Activated CD8-positive, alpha-beta memory T cell treated with anti-CD3 and anti-CD28 coated beads, Interleukin-2, amount 10 ng/mL, durations not matched to agents 7 days and 5 days (primary cell): ENCODE measurements at regions of chr6 and their contacts with region 1.

Region 1: GRCh38 chr6:150006961-150007464 is 18.3 kb downstream of the RAET1L start:
- DNase-seq: peak; percentile 51
- ATAC-seq: no peak
- H3K4me3 Mint-ChIP-seq: no peak overlapping the region
- H3K27ac Mint-ChIP-seq: no peak overlapping the region
- H3K4me1 Mint-ChIP-seq: peaks cover 36% of the 10 kb centered on the region
- H3K27me3 Mint-ChIP-seq: peaks cover 44% of the 10 kb centered on the region

Region 2: GRCh38 chr6:149925974-149926777 is 80.8 kb before region 1 on chr6:
- CTCF ChIA-PET with region 1: no interaction called
- DNase-seq: peak; percentile 90
- ATAC-seq: peak; percentile 76
- H3K4me3 Mint-ChIP-seq: peak overlapping the region; percentile 57
- H3K27ac Mint-ChIP-seq: no peak overlapping the region
- H3K4me1 Mint-ChIP-seq: peaks cover 26% of the 10 kb centered on the region
- H3K27me3 Mint-ChIP-seq: peaks cover 92% of the 10 kb centered on the region

Region 3: GRCh38 chr6:149963462-149964307 is 43.3 kb before region 1 on chr6 and contains the start of gene ULBP1:
- CTCF ChIA-PET with region 1: no interaction called
- DNase-seq: peak; percentile 89
- ATAC-seq: peak; percentile 82
- H3K4me3 Mint-ChIP-seq: peak within 1 kb of the TSS; percentile 85
- H3K27ac Mint-ChIP-seq: peak within 1 kb of the TSS; percentile 86
- H3K4me1 Mint-ChIP-seq: peaks cover 22% of the 10 kb centered on the region
- H3K27me3 Mint-ChIP-seq: peaks cover 81% of the 10 kb centered on the region
- total RNA-seq, gene ULBP1: 0.82 to 1.2 TPM

Region 4: GRCh38 chr6:149990618-149991471 is 16.2 kb before region 1 on chr6:
- CTCF ChIA-PET with region 1: interaction called, 13 read pairs
- DNase-seq: peak; percentile 54
- ATAC-seq: peak; percentile 62
- H3K4me3 Mint-ChIP-seq: peak overlapping the region; percentile 68
- H3K27ac Mint-ChIP-seq: peak overlapping the region; percentile 4
- H3K4me1 Mint-ChIP-seq: peaks cover 32% of the 10 kb centered on the region
- H3K27me3 Mint-ChIP-seq: peaks cover 92% of the 10 kb centered on the region

Region 5: GRCh38 chr6:150499882-150500312 is 492.9 kb after region 1 on chr6:
- CTCF ChIA-PET with region 1: no interaction called
- DNase-seq: no peak
- ATAC-seq: no peak
- H3K4me3 Mint-ChIP-seq: no peak overlapping the region
- H3K27ac Mint-ChIP-seq: no peak overlapping the region
- H3K4me1 Mint-ChIP-seq: no peaks in the 10 kb centered on the region
- H3K27me3 Mint-ChIP-seq: peaks cover 4% of the 10 kb centered on the region